Esophagus muscularis mucosa (tissue), 4 donors: ENCODE measurements at regions of chr9 and their contacts with region 1.

Region 1: DNA sequence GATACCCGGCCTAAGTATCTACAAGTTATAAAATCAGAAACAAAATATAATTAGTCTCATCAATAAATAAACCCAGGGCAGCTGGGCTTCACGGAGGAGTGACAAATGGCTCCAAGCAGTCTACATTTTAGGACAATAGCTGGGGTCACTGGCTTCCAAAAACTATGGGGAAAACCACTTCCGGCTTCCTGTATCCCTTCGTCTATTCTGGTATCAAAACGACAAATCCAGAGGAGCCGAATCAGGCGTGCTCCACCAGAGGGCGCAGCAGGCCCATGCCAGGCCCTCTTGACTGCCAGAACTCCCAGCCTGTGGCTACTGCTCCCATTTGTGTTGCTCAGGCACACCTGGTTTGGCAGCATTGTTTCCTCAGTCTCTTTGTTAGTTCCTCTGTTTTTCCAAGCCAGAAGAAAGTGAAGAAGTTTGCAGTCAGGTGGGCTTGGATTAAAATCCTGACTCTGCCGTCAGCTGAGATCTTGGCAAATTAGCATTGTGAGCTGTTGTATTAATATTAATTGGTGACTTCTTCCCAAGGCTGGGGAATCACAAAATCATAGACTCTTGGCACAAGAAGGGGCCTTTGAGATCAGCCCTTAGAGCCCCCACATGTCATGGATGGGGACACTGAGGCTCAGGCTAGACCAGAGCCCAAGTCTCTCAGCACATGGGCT is 11.6 kb upstream of the RAB14 start:
- DNase-seq: peak; percentile 97
- H3K4me3 ChIP-seq: peak overlapping the region in 1 of 4 donors; percentile 18
- H3K27ac ChIP-seq: peak overlapping the region; percentile 28 to 52 (median 48)
- H3K4me1 ChIP-seq: peaks cover 7 to 11% (median 8%) of the 10 kb centered on the region in 4 donors
- H3K27me3 ChIP-seq: no peaks in the 10 kb centered on the region
- CTCF ChIP-seq: peak; percentile 94 to 99 (median 98)
- EP300 ChIP-seq: no peak
- POLR2A ChIP-seq: no peak

Region 2: GRCh38 chr9:120950421-120951388 is 262.6 kb before region 1 on chr9:
- intact Hi-C with region 1: no loop called
- DNase-seq: no peak
- H3K4me3 ChIP-seq: no peak overlapping the region
- H3K27ac ChIP-seq: peak overlapping the region; percentile 45 to 71 (median 59)
- H3K4me1 ChIP-seq: peaks cover 0 to 19% (median 11%) of the 10 kb centered on the region in 4 donors
- H3K27me3 ChIP-seq: no peaks in the 10 kb centered on the region
- CTCF ChIP-seq: no peak
- EP300 ChIP-seq: no peak
- POLR2A ChIP-seq: no peak

Region 3: DNA sequence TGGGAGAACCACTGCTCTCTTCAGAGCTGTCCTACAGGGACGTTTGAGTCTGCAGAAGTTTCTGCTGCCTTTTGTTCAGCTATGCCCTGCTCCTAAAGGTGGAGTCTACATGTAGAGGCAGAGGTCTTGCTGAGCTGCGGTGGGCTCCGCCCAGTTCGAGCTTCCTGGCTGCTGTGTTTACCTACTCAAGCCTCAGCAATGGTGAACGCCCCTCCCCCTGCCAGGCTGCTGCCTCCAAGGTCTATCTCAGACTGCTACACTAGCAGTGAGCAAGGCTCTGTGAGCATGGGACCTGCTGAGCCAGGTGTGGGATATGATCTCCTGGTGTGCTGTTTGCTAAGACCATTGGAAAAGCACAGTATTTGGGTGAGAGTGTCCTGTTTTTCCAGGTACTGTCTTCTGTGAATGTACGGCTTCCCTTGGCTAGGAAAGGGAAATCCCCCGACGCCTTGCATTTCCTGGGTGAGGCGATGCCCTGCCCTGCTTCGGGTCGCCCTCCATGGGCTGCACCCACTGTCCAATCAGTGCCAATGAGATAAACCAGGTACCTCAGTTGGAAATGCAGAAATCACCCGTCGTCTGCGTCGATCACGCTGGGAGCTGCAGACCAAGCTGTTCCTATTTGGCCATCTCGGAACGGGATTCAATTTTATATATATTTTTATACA is 80.0 kb before region 1 on chr9:
- intact Hi-C with region 1: no loop called
- DNase-seq: no peak
- H3K4me3 ChIP-seq: no peak overlapping the region
- H3K27ac ChIP-seq: no peak overlapping the region
- H3K4me1 ChIP-seq: no peaks in the 10 kb centered on the region
- H3K27me3 ChIP-seq: no peaks in the 10 kb centered on the region
- CTCF ChIP-seq: no peak
- EP300 ChIP-seq: no peak
- POLR2A ChIP-seq: no peak

Region 4: DNA sequence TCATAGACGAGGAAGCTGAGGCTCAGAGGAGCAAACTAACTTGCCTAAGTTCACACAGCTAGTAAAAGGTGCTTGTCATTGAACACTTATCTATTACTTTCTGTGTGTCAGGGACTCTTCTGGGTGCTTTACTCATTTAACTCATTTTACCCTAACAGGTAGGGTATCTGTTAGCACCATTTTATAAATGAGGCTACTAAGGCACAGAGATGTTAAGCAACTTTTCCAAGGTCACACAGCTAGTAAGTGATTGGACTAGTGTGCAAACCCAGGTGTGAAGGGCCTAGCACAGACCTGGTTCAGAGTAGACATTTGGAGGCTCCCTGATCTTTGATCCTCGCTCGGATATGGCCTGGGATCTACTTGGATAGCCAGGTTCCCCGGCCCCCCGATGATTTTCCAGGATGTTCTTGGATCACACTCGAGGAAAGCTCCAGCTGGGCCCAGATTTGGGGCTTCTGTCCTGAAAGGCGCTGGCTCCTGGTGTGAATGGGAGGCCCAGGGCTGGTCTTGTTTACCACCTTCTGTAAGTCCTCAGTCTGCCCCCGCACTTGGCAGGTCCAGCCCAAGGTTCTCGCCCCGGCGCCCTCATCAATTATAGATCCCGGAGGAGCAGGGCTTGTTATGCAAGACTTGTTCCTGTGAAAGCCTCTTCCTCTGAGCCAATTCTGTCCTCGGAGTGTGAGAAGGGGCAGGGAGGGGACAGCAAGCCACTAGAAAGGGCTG is 92.2 kb after region 1 on chr9:
- intact Hi-C with region 1: loop called (anchors 5 kb)
- DNase-seq: peak; percentile 96
- H3K4me3 ChIP-seq: peak overlapping the region; percentile 61 to 76 (median 70)
- H3K27ac ChIP-seq: peak overlapping the region; percentile 93 to 99 (median 95)
- H3K4me1 ChIP-seq: peaks cover 56 to 99% (median 94%) of the 10 kb centered on the region in 4 donors
- H3K27me3 ChIP-seq: no peaks in the 10 kb centered on the region
- CTCF ChIP-seq: no peak
- EP300 ChIP-seq: no peak
- POLR2A ChIP-seq: no peak

Region 5: GRCh38 chr9:121376214-121376830 is 163.1 kb after region 1 on chr9:
- intact Hi-C with region 1: loop called (anchors 1 kb)
- DNase-seq: no peak
- H3K4me3 ChIP-seq: no peak overlapping the region
- H3K27ac ChIP-seq: no peak overlapping the region
- H3K4me1 ChIP-seq: peaks cover 28 to 47% (median 41%) of the 10 kb centered on the region in 4 donors
- H3K27me3 ChIP-seq: no peaks in the 10 kb centered on the region
- CTCF ChIP-seq: peak; percentile 58 to 61 (median 60)
- EP300 ChIP-seq: no peak
- POLR2A ChIP-seq: no peak

Region 6: DNA sequence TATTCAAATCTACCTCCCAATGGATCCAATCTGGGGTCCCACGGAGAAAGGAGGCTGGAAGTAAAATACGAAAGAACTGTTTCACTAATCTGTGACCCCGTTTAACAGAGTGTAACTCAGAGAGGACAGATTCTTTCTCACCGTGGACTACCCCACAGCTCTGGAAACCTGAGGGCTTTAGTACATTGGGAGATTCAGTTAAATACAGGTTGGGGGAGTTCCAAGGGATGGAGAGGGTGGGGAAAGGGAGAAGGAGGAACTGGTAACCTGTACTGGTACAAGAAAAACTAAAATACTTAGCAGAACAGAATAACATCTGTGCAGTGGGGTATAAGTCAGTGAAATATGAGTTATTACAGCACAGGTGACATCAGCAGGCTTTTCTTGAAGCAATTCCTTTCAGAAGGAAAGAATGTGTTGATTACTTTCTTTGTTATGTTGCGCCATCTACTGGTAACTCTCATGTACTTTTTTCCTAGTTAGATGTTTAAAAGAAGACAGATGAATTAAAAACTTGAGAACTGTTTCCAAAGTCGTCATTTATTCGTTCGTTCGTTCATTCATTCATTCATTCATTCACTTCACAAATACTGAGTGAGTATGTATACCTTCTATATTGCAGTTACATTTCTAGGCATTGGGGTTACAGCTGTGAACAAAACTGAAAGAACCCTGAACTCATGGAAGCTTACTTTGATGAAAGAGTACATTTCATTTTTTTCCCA is 186.8 kb after region 1 on chr9:
- intact Hi-C with region 1: loop called (anchors 2 kb)
- DNase-seq: no peak
- H3K4me3 ChIP-seq: no peak overlapping the region
- H3K27ac ChIP-seq: no peak overlapping the region
- H3K4me1 ChIP-seq: peaks cover 0 to 9% (median 2%) of the 10 kb centered on the region in 4 donors
- H3K27me3 ChIP-seq: no peaks in the 10 kb centered on the region
- CTCF ChIP-seq: peak; percentile 69 to 80 (median 79)
- EP300 ChIP-seq: no peak
- POLR2A ChIP-seq: no peak

Region 7: DNA sequence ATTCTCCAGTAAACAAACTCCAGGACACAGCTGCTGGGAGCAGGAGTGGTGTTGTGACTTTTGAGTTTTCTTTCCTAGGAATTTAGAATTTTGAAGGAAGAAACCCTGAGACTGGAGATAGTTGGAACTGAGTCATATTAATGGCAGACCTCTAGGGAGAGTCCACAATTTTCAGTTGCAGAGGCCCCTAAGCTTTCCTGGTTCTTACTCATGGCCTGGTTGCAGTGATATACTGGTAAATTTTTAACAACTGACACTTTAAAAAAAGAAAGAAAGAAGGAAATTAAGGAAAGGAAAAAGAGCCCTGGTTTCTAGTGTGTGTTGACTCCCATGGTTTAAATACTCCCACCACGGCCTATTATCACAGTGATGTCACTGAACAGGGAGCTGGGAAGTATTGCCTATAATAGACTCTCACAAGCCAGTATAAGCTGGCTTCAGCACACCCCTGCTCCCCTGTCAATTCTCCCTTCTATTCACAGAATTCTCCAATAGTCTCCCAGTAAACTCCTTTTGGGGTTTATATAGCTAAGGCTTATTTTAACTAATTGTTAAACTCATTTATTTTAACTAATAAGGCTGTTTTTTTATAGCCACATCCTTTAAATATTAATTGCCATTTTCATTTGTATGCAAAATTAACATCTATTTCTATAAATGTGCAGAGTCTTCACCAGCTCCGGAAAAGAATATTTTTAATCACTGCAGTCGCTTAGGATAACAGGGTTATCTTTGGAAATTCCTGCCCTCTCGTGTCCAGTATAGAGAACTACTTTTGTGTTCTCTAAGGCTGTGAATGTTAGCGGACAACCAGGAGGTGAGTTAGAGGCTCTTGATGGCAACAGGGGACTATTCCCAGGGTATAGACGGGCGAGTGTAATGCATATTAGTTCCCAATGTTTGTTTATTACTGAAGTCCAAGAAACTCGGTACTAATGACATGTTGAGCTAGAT is 226.7 kb after region 1 on chr9:
- intact Hi-C with region 1: no loop called
- DNase-seq: no peak
- H3K4me3 ChIP-seq: no peak overlapping the region
- H3K27ac ChIP-seq: no peak overlapping the region
- H3K4me1 ChIP-seq: peaks cover 0 to 6% (median 0%) of the 10 kb centered on the region in 4 donors
- H3K27me3 ChIP-seq: no peaks in the 10 kb centered on the region
- CTCF ChIP-seq: peak in 1 of 3 experiments; percentile 27
- EP300 ChIP-seq: no peak
- POLR2A ChIP-seq: no peak